H1 (cell line): ENCODE measurements at regions of chr21 and their contacts with region 1.

Region 1: GRCh38 chr21:42991992-42992740 is 17.8 kb downstream of the PKNOX1 start:
- DNase-seq: no peak
- H3K4me3 ChIP-seq: no peak overlapping the region
- H3K27ac ChIP-seq: 0 out of 2 replicates have a peak overlapping the region, but pooled peaks have one; percentile 9
- H3K4me1 ChIP-seq: peaks cover 0 to 4% (median 0%) of the 10 kb centered on the region in 4 experiments; a peak in 2 of 7 replicates
- H3K27me3 ChIP-seq: no peaks in the 10 kb centered on the region
- CTCF ChIP-seq: no peak
- EP300 ChIP-seq: no peak
- POLR2A ChIP-seq: no peak
- RAD21 ChIP-seq: no peak

Region 2: GRCh38 chr21:42858185-42858847 is 133.8 kb before region 1 on chr21:
- CTCF ChIA-PET with region 1: no interaction called
- POLR2A ChIA-PET with region 1: no interaction called
- DNase-seq: no peak
- H3K4me3 ChIP-seq: no peak overlapping the region
- H3K27ac ChIP-seq: no peak overlapping the region
- H3K4me1 ChIP-seq: no peaks in the 10 kb centered on the region
- H3K27me3 ChIP-seq: no peaks in the 10 kb centered on the region
- CTCF ChIP-seq: no peak
- EP300 ChIP-seq: no peak
- POLR2A ChIP-seq: no peak
- RAD21 ChIP-seq: no peak

Region 3: DNA sequence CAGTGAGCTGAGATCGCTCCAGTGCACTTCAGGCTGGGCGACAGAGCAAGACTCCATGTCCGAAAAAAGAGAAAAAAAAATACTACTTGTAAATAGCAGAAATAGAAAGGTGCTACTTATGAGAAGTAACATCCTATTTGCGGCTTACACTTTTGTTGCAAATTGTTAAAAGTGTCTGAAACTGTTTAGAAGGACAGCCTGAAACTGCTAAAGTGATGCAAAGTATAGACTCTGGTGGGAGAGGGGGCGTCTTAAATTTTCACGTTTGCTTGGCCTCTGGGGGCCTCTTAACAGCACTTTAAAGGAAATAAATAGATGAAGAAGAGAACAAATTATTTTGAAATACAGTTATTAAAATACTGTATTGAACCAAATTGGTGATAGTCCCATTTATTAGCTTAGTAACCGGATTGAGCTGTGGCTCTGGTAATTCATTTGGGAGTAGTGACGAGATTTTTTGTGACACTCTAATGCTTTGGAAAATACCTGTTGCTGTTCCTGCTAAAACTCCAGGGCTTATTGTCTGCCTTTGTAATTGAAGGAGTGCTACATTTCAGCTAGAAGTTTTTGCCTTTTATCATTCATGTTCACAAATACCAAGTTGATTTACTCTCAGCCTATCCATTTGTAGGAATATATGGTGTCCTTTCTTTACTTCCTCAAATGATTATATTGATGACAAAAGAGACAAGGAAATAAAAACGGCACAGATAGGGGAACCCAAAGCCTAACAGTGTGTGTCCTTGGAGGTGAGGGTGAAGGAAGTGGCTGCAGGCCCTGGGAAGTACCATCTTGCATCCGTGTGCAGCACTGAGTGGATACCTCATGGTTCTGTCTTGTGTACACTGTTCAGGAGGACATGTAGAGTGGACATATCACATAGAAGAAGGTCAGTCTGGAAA is 11.6 kb before region 1 on chr21:
- CTCF ChIA-PET with region 1: interaction called, 4 read pairs
- POLR2A ChIA-PET with region 1: interaction called, 112 read pairs
- DNase-seq: no peak
- H3K4me3 ChIP-seq: no peak overlapping the region
- H3K27ac ChIP-seq: no peak overlapping the region
- H3K4me1 ChIP-seq: peaks cover 0 to 20% (median 9%) of the 10 kb centered on the region in 4 experiments
- H3K27me3 ChIP-seq: no peaks in the 10 kb centered on the region
- CTCF ChIP-seq: no peak
- EP300 ChIP-seq: no peak
- POLR2A ChIP-seq: no peak
- RAD21 ChIP-seq: no peak